ENCODE measurements at regions of chr5 and their contacts with region 1.

Region 1: DNA sequence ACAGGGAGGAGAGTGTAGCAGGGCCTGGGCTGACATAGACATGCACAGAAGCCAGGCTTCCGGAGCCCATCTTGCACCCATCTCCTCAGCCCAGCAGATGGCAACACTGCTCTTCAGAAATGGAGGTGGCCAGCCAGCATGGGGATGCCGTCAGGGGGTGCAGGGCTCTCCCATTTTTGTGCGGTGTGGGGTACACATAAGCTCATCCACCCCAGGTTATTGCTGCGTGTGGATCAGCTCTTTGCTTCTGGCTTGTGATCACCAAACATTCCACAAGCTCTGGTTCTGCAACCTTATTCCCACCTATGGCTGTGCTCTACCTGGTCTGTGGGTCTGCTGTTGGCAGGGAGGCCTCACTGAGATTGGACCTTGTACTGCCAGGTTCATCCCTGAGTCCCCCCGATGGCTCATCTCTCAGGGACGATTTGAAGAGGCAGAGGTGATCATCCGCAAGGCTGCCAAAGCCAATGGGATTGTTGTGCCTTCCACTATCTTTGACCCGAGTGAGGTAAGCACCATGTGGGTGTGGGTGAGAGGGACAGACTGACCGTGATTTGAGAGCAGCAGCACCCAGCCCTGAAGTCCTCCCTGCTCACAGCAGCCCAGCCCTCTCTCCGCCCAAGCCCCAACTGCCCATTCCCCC is 17.3 kb downstream of the SLC22A5 start:
- DNase-seq: peak; percentile 86

Region 2: GRCh38 chr5:132327252-132327955 is 59.4 kb before region 1 on chr5:
- intact Hi-C with region 1: no loop called
- DNase-seq: no peak

Region 3: GRCh38 chr5:132410451-132411381 is 24.0 kb after region 1 on chr5:
- intact Hi-C with region 1: loop called (anchors 2 kb)
- DNase-seq: peak; percentile 94

Region 4: GRCh38 chr5:132419502-132420468 is 33.0 kb after region 1 on chr5:
- intact Hi-C with region 1: loop called (anchors 5 kb)
- DNase-seq: peak; percentile 90

Region 5: GRCh38 chr5:132476876-132477781 is 90.4 kb after region 1 on chr5:
- intact Hi-C with region 1: no loop called
- DNase-seq: no peak

Region 6: GRCh38 chr5:132500931-132501630 is 114.3 kb after region 1 on chr5:
- intact Hi-C with region 1: loop called (anchors 1 kb)
- DNase-seq: no peak

Region 7: DNA sequence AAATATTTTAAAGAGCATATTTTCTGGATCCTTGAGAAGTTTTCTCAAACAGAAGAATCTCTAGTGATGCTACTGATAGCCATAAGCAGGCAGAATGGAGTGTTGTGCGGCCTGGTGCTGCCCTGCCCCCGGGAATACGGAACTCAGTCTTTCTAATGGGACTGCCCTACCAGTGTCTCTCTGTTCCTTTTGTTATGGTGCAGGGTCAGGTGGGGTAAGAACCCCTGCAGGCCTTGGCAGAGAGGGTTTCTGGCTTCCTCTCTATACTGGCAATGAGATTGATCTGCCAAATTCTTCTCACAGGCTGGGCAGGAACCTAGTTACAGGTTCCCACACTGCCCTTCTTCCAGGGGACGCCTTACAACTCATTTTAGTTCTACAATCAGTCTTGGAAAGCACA is 154.0 kb after region 1 on chr5:
- intact Hi-C with region 1: no loop called
- DNase-seq: no peak

Region 8: DNA sequence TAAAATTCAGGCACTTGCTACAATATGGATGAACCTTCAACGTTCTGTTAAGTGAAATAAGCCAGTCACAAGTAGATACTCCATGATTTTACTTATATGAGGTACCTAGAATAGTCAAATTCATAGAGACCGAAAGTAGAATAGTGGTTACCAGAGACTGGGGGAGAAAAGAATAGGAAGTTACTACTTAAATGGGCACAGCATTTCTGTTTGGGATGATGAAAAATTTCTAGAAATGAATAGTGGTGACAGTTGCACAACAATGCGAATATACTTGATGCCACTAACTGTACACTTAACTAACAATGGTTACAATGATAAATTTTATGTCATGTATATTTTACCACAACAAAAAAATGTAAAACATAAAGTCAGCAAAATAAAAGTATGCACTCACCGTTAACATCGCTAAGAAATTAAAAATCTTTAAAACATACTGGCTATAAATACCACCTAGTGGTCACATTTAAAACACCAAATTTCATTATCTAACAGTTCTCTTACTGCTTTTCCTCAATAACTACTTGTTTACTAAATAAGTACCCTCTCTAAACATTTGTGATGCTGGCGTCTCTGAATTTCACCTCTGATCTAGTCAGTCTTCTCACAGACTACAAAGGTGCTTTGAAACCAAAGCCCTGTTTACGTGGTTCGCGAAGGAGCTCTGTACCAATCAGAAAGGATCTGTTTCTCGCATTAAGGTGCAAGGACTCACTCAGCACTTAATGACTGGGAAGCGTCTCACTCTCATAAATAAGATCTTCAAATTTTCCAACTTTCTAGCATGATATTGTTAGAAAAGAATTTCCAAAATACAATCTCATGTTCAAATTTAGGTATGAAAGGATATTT is 327.9 kb after region 1 on chr5:
- intact Hi-C with region 1: loop called (anchors 10 kb)
- DNase-seq: no peak

Region 9: DNA sequence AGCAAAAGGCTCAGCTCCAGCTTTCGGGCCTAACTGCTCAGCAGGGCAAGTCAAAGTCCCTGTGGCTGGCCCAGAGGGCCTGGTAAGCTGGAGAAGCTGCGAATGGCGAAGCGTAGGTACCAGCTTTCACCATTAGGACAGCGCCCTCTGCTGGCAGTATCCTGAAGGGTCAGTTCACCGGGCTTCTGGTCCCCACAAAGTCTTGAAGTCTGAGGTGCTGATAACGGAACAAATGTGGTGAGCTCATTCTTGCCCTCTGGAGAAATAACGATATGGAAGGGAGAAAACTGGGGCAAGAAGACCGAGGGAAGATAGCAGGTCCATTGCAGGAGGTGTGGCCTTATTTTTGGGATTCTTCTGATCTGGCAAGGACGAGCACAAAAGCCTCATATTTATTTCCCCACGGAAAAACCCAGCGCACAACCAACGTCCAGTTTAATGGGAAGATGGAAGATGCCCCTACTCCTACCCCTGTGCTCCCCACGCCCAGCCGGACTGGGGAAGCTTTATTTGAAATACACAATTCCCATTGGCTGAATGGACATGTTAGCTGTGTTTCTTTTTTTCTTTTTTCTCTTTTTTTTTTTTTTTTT is 433.5 kb after region 1 on chr5:
- intact Hi-C with region 1: loop called (anchors 5 kb)
- DNase-seq: peak; percentile 92

Measured in cardiac septum (tissue), 1 donor.